ENCODE measurements at regions of chr11 and their contacts with region 1.

Region 1: GRCh38 chr11:19861171-19861570 is 148.5 kb downstream of the NAV2 start:
- DNase-seq: peak; percentile 90
- H3K4me3 ChIP-seq: no peak overlapping the region
- H3K27ac ChIP-seq: peak overlapping the region; percentile 59
- H3K4me1 ChIP-seq: peaks cover 35% of the 10 kb centered on the region
- H3K27me3 ChIP-seq: no peaks in the 10 kb centered on the region
- CTCF ChIP-seq: no peak
- POLR2A ChIP-seq: peak; percentile 43

Region 2: GRCh38 chr11:19777377-19778102 is 83.6 kb before region 1 on chr11:
- CTCF ChIA-PET with region 1: interaction called, 4 read pairs
- POLR2A ChIA-PET with region 1: no interaction called
- dilution Hi-C with region 1: no loop called
- intact Hi-C with region 1: loop called (anchors 1 kb)
- DNase-seq: peak; percentile 82
- H3K4me3 ChIP-seq: peak overlapping the region; percentile 18 to 60 (median 57)
- H3K27ac ChIP-seq: peak overlapping the region; percentile 38
- H3K4me1 ChIP-seq: peaks cover 14% of the 10 kb centered on the region
- H3K27me3 ChIP-seq: no peaks in the 10 kb centered on the region
- CTCF ChIP-seq: no peak
- POLR2A ChIP-seq: no peak

Measured in endothelial cell of umbilical vein (primary cell).